ENCODE measurements at regions of chr14 and their contacts with region 1.

Region 1: GRCh38 chr14:75258615-75259466 is 19.8 kb upstream of the FOS start:
- DNase-seq: peak; percentile 100
- H3K4me3 ChIP-seq: peak overlapping the region; percentile 31 to 64 (median 39)
- H3K4me3 Mint-ChIP-seq: peak overlapping the region; percentile 79 to 92
- H3K27ac ChIP-seq: peak overlapping the region; percentile 98 to 100
- H3K27ac Mint-ChIP-seq: peak overlapping the region; percentile 99 to 100 (median 100)
- H3K4me1 ChIP-seq: peaks cover 30 to 44% of the 10 kb centered on the region in 2 donors
- H3K4me1 Mint-ChIP-seq: peaks cover 51% of the 10 kb centered on the region
- H3K27me3 ChIP-seq: no peaks in the 10 kb centered on the region
- H3K27me3 Mint-ChIP-seq: peaks cover 0 to 2% (median 1%) of the 10 kb centered on the region in 3 donors
- CTCF ChIP-seq: peak; percentile 2

Region 2: GRCh38 chr14:75188520-75189268 is 70.1 kb before region 1 on chr14:
- intact Hi-C with region 1: loop called (anchors 5 kb)
- DNase-seq: peak; percentile 95 to 99 (median 97)
- H3K4me3 ChIP-seq: peak overlapping the region in 1 of 3 experiments; percentile 31
- H3K4me3 Mint-ChIP-seq: peak overlapping the region in 1 of 2 donors; percentile 28
- H3K27ac ChIP-seq: peak overlapping the region; percentile 74 to 82
- H3K27ac Mint-ChIP-seq: peak overlapping the region; percentile 92 to 96 (median 94)
- H3K4me1 ChIP-seq: peaks cover 56 to 68% of the 10 kb centered on the region in 2 donors
- H3K4me1 Mint-ChIP-seq: peaks cover 57% of the 10 kb centered on the region
- H3K27me3 ChIP-seq: no peaks in the 10 kb centered on the region
- H3K27me3 Mint-ChIP-seq: no peaks in the 10 kb centered on the region
- CTCF ChIP-seq: no peak

Region 3: DNA sequence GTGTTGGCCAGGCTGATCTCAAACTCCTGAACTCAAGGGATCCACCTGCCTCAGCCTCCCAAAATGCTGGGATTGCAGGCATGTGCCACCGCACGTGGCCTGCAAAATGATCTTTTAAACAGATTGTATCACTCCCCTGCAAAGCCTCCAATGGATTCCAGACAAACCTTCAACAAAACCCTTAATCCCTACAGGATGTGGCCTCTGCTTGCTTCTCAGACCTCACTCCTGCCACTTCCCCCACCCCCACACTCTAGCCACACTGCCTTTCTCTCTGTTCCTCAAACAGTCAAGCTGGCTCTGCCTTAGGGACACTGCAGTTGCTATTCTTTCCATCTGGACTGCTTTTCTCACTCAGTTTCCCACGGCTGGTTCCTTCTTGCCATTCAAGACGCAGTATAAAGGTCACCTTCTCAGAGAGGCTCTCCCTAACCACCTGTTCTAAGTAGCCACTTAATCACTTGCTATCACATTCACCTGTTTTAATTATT is 35.1 kb before region 1 on chr14:
- intact Hi-C with region 1: loop called in 1 of 2 experiments (anchors 5 kb)
- DNase-seq: peak; percentile 47 to 70 (median 62)
- H3K4me3 ChIP-seq: no peak overlapping the region
- H3K4me3 Mint-ChIP-seq: peak overlapping the region in 1 of 2 donors; percentile 64
- H3K27ac ChIP-seq: no peak overlapping the region
- H3K27ac Mint-ChIP-seq: peak overlapping the region; percentile 65 to 84 (median 83)
- H3K4me1 ChIP-seq: peaks cover 52 to 62% of the 10 kb centered on the region in 2 donors
- H3K4me1 Mint-ChIP-seq: peaks cover 46% of the 10 kb centered on the region
- H3K27me3 ChIP-seq: no peaks in the 10 kb centered on the region
- H3K27me3 Mint-ChIP-seq: peaks cover 0 to 3% (median 0%) of the 10 kb centered on the region in 3 donors
- CTCF ChIP-seq: no peak

Region 4: GRCh38 chr14:75234173-75235115 is 24.4 kb before region 1 on chr14:
- intact Hi-C with region 1: loop called in 1 of 2 experiments (anchors 2 kb)
- DNase-seq: peak; percentile 88 to 93 (median 88)
- H3K4me3 ChIP-seq: peak overlapping the region in 1 of 3 experiments; percentile 46
- H3K4me3 Mint-ChIP-seq: peak overlapping the region; percentile 47 to 85
- H3K27ac ChIP-seq: peak overlapping the region; percentile 83 to 89
- H3K27ac Mint-ChIP-seq: peak overlapping the region; percentile 90 to 98 (median 96)
- H3K4me1 ChIP-seq: peaks cover 67 to 74% of the 10 kb centered on the region in 2 donors
- H3K4me1 Mint-ChIP-seq: peaks cover 70% of the 10 kb centered on the region
- H3K27me3 ChIP-seq: no peaks in the 10 kb centered on the region
- H3K27me3 Mint-ChIP-seq: peaks cover 0 to 4% (median 3%) of the 10 kb centered on the region in 3 donors
- CTCF ChIP-seq: no peak